IMR-90 (cell line): ENCODE measurements at regions of chr10 and their contacts with region 1.

Region 1: GRCh38 chr10:4512671-4513240 is 313.3 kb upstream of the AKR1E2 start:
- DNase-seq: peak; percentile 71
- ATAC-seq: peak; percentile 77
- H3K4me3 ChIP-seq: no peak overlapping the region
- H3K27ac ChIP-seq: no peak overlapping the region
- H3K4me1 ChIP-seq: no peaks in the 10 kb centered on the region
- H3K27me3 ChIP-seq: no peaks in the 10 kb centered on the region
- CTCF ChIP-seq: peak; percentile 67
- POLR2A ChIP-seq: no peak
- RAD21 ChIP-seq: peak; percentile 71

Region 2: GRCh38 chr10:3197348-3198003 is 1315.3 kb before region 1 on chr10:
- CTCF ChIA-PET with region 1: no interaction called
- POLR2A ChIA-PET with region 1: no interaction called
- dilution Hi-C with region 1: no loop called
- in situ Hi-C with region 1: loop called (anchors 25 kb)
- intact Hi-C with region 1: loop called (anchors 10 kb)
- DNase-seq: peak; percentile 84
- ATAC-seq: peak; percentile 91
- H3K4me3 ChIP-seq: peak overlapping the region; percentile 37
- H3K27ac ChIP-seq: peak overlapping the region; percentile 12
- H3K4me1 ChIP-seq: peaks cover 10% of the 10 kb centered on the region
- H3K27me3 ChIP-seq: peaks cover 9% of the 10 kb centered on the region
- CTCF ChIP-seq: peak; percentile 95
- POLR2A ChIP-seq: peak; percentile 66
- RAD21 ChIP-seq: peak; percentile 98

Region 3: GRCh38 chr10:3222065-3222464 is 1290.7 kb before region 1 on chr10:
- CTCF ChIA-PET with region 1: no interaction called
- POLR2A ChIA-PET with region 1: no interaction called
- dilution Hi-C with region 1: no loop called
- in situ Hi-C with region 1: loop called (anchors 25 kb)
- intact Hi-C with region 1: no loop called
- DNase-seq: no peak
- ATAC-seq: no peak
- H3K4me3 ChIP-seq: no peak overlapping the region
- H3K27ac ChIP-seq: no peak overlapping the region
- H3K4me1 ChIP-seq: peaks cover 8% of the 10 kb centered on the region
- H3K27me3 ChIP-seq: no peaks in the 10 kb centered on the region
- CTCF ChIP-seq: 0 out of 2 replicates have a peak, but pooled peaks have one; percentile 12
- POLR2A ChIP-seq: no peak
- RAD21 ChIP-seq: no peak